ENCODE measurements at regions of chr15 and their contacts with region 1.

Region 1: DNA sequence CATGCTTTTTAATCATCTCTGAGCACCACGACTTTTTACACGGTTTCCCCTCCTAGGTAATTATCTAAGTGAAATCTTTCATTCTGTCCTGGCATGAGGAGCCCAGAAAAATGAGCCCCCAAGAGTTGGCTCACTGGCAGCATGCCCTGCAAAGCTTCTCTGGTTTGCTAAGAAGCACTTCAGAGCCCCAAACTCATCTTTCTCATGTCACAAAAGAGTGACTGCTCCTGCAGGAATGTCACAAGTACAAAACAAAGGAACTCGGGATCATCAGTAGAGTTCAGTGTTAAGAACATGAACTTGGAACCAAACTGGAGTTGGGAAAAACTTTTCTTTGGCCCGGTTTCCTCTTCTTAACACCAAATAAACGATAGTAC is 123.9 kb downstream of the FOXB1 start:
- DNase-seq: no peak
- ATAC-seq: no peak
- H3K4me3 Mint-ChIP-seq: peak overlapping the region; percentile 76
- H3K27ac Mint-ChIP-seq: peak overlapping the region; percentile 78
- H3K4me1 Mint-ChIP-seq: peaks cover 39% of the 10 kb centered on the region
- H3K27me3 Mint-ChIP-seq: no peaks in the 10 kb centered on the region
- CTCF ChIP-seq: no peak

Region 2: DNA sequence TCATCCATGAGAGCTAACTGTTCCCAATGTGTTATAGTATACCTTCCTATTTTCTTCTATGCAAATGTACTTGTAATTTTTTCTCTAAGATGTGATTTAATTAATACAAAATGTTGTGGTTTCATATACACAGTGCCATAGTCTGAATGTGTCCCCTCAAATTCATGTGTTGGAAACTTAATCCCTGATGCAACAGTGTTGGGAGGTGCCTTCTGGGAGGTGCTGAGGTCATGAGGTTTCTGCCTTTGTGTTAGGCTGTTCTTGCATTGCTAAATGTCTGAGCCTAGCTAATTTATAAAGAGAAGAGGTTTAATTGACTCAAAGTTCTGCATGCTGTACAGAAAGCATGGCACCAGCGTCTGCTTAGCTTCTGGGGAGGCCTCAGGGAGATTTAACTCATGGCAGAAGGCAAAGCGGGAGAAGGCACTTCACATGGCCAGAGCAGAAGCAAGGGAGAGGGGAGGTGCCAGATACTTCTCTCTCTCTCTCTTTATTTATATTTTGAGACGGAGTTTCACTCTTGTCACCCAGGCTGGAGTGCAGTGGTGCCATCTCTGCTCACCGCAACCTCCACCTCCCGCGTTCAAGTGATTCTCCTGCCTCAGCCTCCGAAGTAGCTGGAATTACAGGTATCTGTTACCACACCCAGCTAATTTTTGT is 404.2 kb before region 1 on chr15:
- CTCF ChIA-PET with region 1: no interaction called
- POLR2A ChIA-PET with region 1: no interaction called
- intact Hi-C with region 1: no loop called
- DNase-seq: no peak
- ATAC-seq: no peak
- H3K4me3 Mint-ChIP-seq: no peak overlapping the region
- H3K27ac Mint-ChIP-seq: no peak overlapping the region
- H3K4me1 Mint-ChIP-seq: peaks cover 3% of the 10 kb centered on the region
- H3K27me3 Mint-ChIP-seq: peaks cover 2% of the 10 kb centered on the region
- CTCF ChIP-seq: no peak

Region 3: GRCh38 chr15:60006203-60006862 is 121.7 kb before region 1 on chr15:
- CTCF ChIA-PET with region 1: no interaction called
- POLR2A ChIA-PET with region 1: no interaction called
- intact Hi-C with region 1: loop called (anchors 5 kb)
- DNase-seq: peak; percentile 88
- ATAC-seq: peak; percentile 77
- H3K4me3 Mint-ChIP-seq: peak overlapping the region; percentile 79
- H3K27ac Mint-ChIP-seq: peak overlapping the region; percentile 75
- H3K4me1 Mint-ChIP-seq: peaks cover 29% of the 10 kb centered on the region
- H3K27me3 Mint-ChIP-seq: peaks cover 84% of the 10 kb centered on the region
- CTCF ChIP-seq: no peak

Region 4: GRCh38 chr15:60438646-60439045 is 310.7 kb after region 1 on chr15:
- CTCF ChIA-PET with region 1: no interaction called
- POLR2A ChIA-PET with region 1: no interaction called
- intact Hi-C with region 1: no loop called
- DNase-seq: no peak
- ATAC-seq: no peak
- H3K4me3 Mint-ChIP-seq: no peak overlapping the region
- H3K27ac Mint-ChIP-seq: no peak overlapping the region
- H3K4me1 Mint-ChIP-seq: peaks cover 3% of the 10 kb centered on the region
- H3K27me3 Mint-ChIP-seq: no peaks in the 10 kb centered on the region
- CTCF ChIP-seq: no peak